ENCODE measurements at regions of chr1 and their contacts with region 1.

Region 1: GRCh38 chr1:224542783-224543440 is 73.2 kb upstream of the CNIH3 start:
- DNase-seq: peak; percentile 28
- H3K4me3 Mint-ChIP-seq: no peak overlapping the region
- H3K27ac Mint-ChIP-seq: no peak overlapping the region
- H3K4me1 Mint-ChIP-seq: peaks cover 29% of the 10 kb centered on the region
- H3K27me3 Mint-ChIP-seq: peaks cover 18% of the 10 kb centered on the region

Region 2: DNA sequence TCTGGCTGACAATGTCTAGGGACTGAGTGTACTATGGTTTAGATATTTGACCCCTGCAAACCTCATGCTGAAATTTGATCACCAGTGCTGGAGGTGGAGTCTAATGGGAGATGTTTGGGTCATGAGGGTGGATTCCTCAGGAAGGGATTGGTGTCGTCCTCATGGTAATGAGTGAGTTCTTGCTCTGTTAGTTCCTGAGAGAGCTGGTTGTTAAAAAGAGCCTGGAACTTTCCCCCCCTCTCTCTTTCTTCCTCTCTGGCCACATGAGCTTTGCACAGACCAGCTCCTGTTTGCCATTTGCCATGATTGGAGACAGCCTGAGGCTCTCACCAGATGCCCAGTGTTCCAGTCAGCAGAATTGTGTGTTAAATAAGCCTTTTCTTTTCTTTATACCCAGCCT is 36.6 kb after region 1 on chr1:
- intact Hi-C with region 1: no loop called
- DNase-seq: no peak
- H3K4me3 Mint-ChIP-seq: no peak overlapping the region
- H3K27ac Mint-ChIP-seq: no peak overlapping the region
- H3K4me1 Mint-ChIP-seq: no peaks in the 10 kb centered on the region
- H3K27me3 Mint-ChIP-seq: peaks cover 28% of the 10 kb centered on the region

Region 3: DNA sequence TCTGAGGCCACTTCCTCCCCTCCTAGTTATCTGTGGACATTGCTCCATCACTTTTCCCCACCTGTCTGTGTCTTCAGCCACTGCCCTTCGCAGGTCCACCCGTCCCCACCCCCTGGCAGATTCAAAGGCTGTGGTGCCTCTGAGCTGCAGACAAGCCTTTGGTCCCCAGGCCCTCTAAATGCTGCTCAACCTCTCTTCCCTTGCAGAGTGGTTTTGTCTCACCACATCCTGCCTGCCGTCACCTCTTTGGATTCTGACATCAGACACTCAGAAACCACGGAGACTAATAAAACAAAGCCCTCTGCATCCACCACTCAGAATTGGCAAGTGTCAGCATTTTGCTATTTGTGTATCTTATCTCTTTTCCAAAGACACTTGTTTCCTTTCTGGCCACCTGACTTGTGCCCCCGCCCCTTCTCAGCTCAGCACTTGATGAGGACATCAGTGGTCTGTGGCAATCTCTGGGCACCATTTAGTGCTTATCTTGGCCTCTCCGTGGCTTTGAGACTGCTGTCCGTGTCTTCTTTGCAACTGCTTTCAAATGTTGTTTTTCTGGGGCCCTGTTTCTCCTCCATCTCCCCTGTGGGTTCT is 80.9 kb after region 1 on chr1:
- intact Hi-C with region 1: loop called (anchors 2 kb)
- DNase-seq: peak; percentile 86
- H3K4me3 Mint-ChIP-seq: peak overlapping the region; percentile 65
- H3K27ac Mint-ChIP-seq: peak overlapping the region; percentile 91
- H3K4me1 Mint-ChIP-seq: peaks cover 39% of the 10 kb centered on the region
- H3K27me3 Mint-ChIP-seq: peaks cover 28% of the 10 kb centered on the region